ENCODE measurements at regions of chr2 and their contacts with region 1.

Region 1: GRCh38 chr2:231191896-231192872 is 6.2 kb upstream of the ARMC9 start:
- DNase-seq: peak; percentile 64 to 79
- H3K4me3 ChIP-seq: no peak overlapping the region
- H3K27ac ChIP-seq: no peak overlapping the region
- H3K4me1 ChIP-seq: peaks cover 0 to 16% (median 10%) of the 10 kb centered on the region in 4 experiments; a peak in 6 of 7 replicates
- H3K27me3 ChIP-seq: no peaks in the 10 kb centered on the region
- CTCF ChIP-seq: peak; percentile 75 to 85 (median 81)
- EP300 ChIP-seq: no peak
- POLR2A ChIP-seq: no peak
- RAD21 ChIP-seq: peak; percentile 72 to 80

Region 2: DNA sequence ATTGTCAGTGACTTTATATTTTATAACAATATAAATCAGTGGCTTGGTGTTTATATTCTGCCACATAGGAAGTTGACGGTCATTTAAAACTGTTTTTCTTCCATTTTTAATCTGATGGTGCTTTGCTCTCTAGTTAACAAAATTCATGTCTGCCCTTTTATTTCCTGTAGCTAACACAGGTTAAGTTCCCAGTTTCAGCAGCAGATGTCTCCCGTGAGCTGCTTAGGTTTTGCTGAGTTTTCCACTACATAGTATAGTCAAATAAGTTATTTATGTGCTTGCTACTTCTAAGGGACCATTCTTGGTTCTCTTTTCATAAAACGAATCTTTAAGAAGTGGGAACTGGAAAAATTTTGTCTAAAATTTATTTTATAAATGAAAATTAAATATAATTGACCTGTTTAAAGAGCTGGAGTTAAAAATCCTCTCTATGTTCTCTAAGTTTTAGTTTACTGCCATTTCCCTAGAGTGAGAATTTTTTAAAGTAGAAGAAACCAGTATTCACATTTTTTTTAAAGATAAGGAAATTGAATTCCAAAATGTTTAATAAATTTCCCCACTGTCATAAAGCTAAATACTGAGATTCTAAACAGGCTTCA is 88.0 kb before region 1 on chr2:
- CTCF ChIA-PET with region 1: interaction called, 17 read pairs
- POLR2A ChIA-PET with region 1: no interaction called
- DNase-seq: peak in 1 of 2 experiments; percentile 64
- H3K4me3 ChIP-seq: no peak overlapping the region
- H3K27ac ChIP-seq: no peak overlapping the region
- H3K4me1 ChIP-seq: no peaks in the 10 kb centered on the region
- H3K27me3 ChIP-seq: no peaks in the 10 kb centered on the region
- CTCF ChIP-seq: peak in 2 of 3 experiments; percentile 67 to 70; a peak in 3 of 4 replicates
- EP300 ChIP-seq: no peak
- POLR2A ChIP-seq: no peak
- RAD21 ChIP-seq: peak; percentile 80 to 83

Region 3: DNA sequence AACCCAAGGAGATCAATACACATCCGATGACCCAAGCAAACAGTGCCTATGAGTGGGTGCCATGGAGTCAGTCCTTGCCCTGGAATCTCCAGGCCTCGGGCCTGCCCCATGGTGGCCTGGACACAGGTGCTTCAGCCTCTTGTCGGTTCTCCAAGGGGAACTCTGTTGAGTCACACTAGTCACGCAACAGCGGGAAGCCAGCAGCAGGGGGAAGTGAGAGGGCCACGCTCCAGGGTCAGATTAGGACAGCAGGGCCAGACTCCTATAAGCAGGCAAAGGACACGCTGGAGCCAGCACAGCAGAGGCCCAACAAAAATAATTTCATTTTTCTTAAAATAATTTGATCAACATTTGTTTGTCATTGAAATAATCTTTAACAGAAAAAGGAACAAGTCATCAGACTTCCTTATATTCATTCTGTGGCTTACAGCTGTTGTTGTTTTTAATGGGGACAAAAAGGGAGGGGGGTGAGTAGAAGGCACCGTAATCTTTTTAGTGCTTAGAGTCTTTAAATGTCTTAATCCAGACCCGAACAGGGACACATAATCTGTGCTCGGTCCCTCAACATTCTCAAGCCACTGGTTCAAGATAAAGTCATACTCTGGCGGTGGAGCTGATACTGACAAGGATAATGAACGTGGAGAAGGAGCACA is 10.2 kb before region 1 on chr2:
- CTCF ChIA-PET with region 1: interaction called, 12 read pairs
- POLR2A ChIA-PET with region 1: interaction called, 6 read pairs
- DNase-seq: no peak
- H3K4me3 ChIP-seq: no peak overlapping the region
- H3K27ac ChIP-seq: no peak overlapping the region
- H3K4me1 ChIP-seq: peaks cover 3 to 10% (median 6%) of the 10 kb centered on the region in 4 experiments; a peak in 6 of 7 replicates
- H3K27me3 ChIP-seq: no peaks in the 10 kb centered on the region
- CTCF ChIP-seq: no peak
- EP300 ChIP-seq: no peak
- POLR2A ChIP-seq: no peak
- RAD21 ChIP-seq: no peak

Region 4: DNA sequence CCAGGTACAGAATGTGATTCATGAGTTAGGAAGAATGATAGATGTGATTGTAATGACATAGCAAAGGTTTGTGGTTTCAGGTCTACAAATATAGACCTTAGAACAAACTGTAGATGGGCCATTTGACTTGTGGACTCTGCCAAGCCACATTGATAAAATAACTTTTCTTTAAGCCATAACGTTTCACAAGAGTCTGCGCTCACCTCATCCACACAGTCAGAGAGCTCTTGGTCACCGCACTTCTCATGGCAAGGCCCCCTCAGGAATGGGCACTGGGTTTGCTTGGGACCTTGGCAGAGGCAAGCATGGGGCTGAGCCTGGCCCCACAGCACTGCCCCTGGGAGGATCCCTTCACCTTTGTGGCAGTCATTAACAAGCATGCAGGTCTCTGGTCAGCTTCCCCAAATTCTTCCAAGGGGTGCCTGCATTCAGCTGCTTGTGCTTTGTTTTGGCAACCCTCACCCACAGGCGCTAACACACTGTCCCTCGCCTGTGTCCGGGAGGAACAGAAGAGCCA is 20.2 kb after region 1 on chr2:
- CTCF ChIA-PET with region 1: interaction called, 11 read pairs
- POLR2A ChIA-PET with region 1: interaction called, 4 read pairs
- DNase-seq: no peak
- H3K4me3 ChIP-seq: no peak overlapping the region
- H3K27ac ChIP-seq: no peak overlapping the region
- H3K4me1 ChIP-seq: no peaks in the 10 kb centered on the region
- H3K27me3 ChIP-seq: no peaks in the 10 kb centered on the region
- CTCF ChIP-seq: no peak
- EP300 ChIP-seq: no peak
- POLR2A ChIP-seq: no peak
- RAD21 ChIP-seq: no peak